Activated CD4-positive, alpha-beta memory T cell treated with anti-CD3 and anti-CD28 coated beads for 36 hours (primary cell): ENCODE measurements at regions of chr4 and their contacts with region 1.

Region 1: GRCh38 chr4:122732329-122733026 is at the start of gene BBS12:
- DNase-seq: peak; percentile 100
- H3K4me3 Mint-ChIP-seq: peak within 1 kb of the TSS; percentile 87
- H3K27ac Mint-ChIP-seq: peak within 1 kb of the TSS; percentile 87
- H3K4me1 Mint-ChIP-seq: peaks cover 27% of the 10 kb centered on the region
- H3K27me3 Mint-ChIP-seq: no peaks in the 10 kb centered on the region
- total RNA-seq, gene BBS12: 3.7 to 4.3 TPM

Region 2: DNA sequence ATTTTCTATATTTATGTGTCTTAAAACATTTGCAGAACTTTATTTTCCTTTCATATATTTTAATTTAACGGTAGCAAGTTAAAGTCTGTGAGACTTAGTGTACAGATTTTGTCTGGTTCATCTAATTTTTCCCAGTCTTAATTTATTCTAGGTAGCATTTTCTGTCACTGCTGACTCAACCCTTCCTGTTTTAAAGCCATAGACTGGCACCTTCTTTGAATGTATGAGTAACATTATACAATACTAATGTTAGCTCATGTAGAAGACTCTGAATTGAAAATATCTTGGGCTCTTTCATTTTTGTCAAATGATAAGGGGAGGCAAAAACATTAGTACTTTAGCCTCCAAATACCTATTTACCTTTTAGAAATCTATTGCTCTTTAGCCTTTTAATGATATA is 536.8 kb before region 1 on chr4:
- CTCF ChIA-PET with region 1: no interaction called
- POLR2A ChIA-PET with region 1: no interaction called
- intact Hi-C with region 1: no loop called
- DNase-seq: no peak
- H3K4me3 Mint-ChIP-seq: no peak overlapping the region
- H3K27ac Mint-ChIP-seq: no peak overlapping the region
- H3K4me1 Mint-ChIP-seq: peaks cover 9% of the 10 kb centered on the region
- H3K27me3 Mint-ChIP-seq: no peaks in the 10 kb centered on the region

Region 3: GRCh38 chr4:122716825-122717448 is 15.5 kb before region 1 on chr4:
- CTCF ChIA-PET with region 1: interaction called, 31 read pairs
- POLR2A ChIA-PET with region 1: no interaction called
- intact Hi-C with region 1: loop called (anchors 1 kb)
- DNase-seq: peak; percentile 85
- H3K4me3 Mint-ChIP-seq: peak overlapping the region; percentile 37
- H3K27ac Mint-ChIP-seq: peak overlapping the region; percentile 23
- H3K4me1 Mint-ChIP-seq: peaks cover 36% of the 10 kb centered on the region
- H3K27me3 Mint-ChIP-seq: peaks cover 2% of the 10 kb centered on the region

Region 4: GRCh38 chr4:122930862-122931261 is 198.4 kb after region 1 on chr4:
- CTCF ChIA-PET with region 1: interaction called, 18 read pairs
- POLR2A ChIA-PET with region 1: no interaction called
- intact Hi-C with region 1: no loop called
- DNase-seq: no peak
- H3K4me3 Mint-ChIP-seq: no peak overlapping the region
- H3K27ac Mint-ChIP-seq: no peak overlapping the region
- H3K4me1 Mint-ChIP-seq: peaks cover 6% of the 10 kb centered on the region
- H3K27me3 Mint-ChIP-seq: no peaks in the 10 kb centered on the region